ENCODE measurements at regions of chr11 and their contacts with region 1.

Region 1: DNA sequence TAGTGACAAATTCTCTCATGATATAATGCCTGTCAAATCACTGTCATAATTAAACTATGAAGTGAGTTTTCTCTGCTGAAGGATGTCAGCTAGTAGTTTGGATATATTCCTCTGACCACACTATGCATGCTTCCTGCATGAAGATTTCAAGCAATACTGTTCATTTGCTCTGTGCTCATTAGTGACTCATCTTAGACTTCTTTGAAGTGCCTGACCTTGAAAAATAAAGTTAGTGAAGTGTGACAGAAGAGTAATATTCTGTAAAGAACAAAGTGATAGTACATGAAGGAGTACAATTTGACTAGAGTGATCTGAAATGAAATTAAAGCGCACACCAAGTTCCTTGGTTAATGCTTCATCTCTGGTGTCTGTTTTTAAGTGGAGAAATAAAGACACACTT is 629.5 kb upstream of the ANO3 start:
- DNase-seq: no peak
- ATAC-seq: no peak

Region 2: DNA sequence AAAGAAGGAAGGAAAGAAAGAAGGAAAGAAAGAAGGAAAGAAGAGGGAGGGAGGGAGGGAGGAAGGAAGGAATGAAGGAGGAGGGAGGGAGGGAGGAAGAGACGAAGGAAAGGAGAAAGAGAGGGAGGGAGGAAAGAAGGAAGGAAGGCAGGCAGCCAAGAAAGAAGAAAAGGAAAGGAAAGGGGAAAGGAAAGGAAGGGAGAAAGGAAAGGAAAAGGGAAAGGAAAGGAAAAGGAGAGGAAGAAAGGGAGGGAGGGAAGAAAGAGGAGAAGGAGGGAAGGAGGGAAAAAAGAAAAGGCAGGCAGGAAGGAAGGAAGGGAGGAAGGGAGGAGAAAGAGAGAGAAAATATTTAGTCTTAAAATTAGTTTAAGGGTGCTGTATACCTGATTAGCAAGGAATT is 501.5 kb before region 1 on chr11:
- intact Hi-C with region 1: loop called (anchors 5 kb)
- DNase-seq: no peak
- ATAC-seq: no peak